ENCODE measurements at regions of chr4 and their contacts with region 1.

Region 1: GRCh38 chr4:2436301-2436700 is 17.5 kb downstream of the CFAP99 start:
- DNase-seq: peak in 2 of 3 donors; percentile 31 to 38
- H3K4me3 ChIP-seq: no peak overlapping the region
- H3K27ac ChIP-seq: no peak overlapping the region
- H3K4me1 ChIP-seq: peaks cover 0 to under 1% (median 0%) of the 10 kb centered on the region in 4 experiments
- H3K27me3 ChIP-seq: no peaks in the 10 kb centered on the region

Region 2: DNA sequence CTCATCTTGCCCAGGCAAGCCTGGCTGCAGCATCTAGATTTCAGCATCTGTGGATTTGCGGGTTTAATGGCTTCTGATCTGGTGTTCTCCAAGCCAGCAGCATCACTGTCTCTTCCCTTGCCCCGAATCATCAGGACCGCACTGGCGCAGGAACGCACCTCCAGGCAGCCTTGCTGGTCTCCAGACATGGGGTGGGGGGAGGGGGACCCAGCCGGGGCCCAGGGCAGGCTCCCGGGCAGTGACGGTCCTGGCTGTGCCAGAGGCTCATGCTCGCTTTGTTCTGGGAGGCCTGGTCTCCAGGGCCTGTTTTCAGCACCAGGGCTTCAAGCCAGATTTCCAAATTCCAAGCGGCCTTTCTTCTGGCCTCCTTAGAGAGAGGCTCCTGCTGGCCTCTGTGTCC is 12.6 kb before region 1 on chr4:
- CTCF ChIA-PET with region 1: interaction called, 13 read pairs
- POLR2A ChIA-PET with region 1: no interaction called
- DNase-seq: no peak
- H3K4me3 ChIP-seq: no peak overlapping the region
- H3K27ac ChIP-seq: no peak overlapping the region
- H3K4me1 ChIP-seq: peaks cover 0 to 10% (median 9%) of the 10 kb centered on the region in 4 experiments
- H3K27me3 ChIP-seq: peaks cover 8 to 27% (median 21%) of the 10 kb centered on the region in 5 experiments

Region 3: DNA sequence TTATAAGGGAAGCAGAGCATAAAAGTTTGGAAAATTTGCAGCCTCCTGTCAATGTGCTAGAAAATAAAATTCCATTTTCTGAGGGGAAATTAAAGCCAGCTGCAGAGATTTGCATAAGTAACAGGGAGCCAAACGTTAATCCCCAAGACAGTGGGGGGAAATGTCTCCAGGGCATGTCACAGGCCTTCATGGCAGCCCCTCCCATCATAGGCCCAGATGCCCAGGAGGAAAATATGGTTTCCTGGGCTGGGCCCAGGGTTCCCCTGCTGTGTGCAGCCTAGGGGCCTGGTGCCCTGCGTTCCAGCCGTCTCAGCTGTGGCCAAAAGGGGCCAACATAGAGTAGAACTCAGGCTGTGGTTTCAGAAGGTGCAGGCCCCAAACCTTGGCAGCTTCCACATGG is 41.9 kb after region 1 on chr4:
- CTCF ChIA-PET with region 1: no interaction called
- POLR2A ChIA-PET with region 1: no interaction called
- DNase-seq: no peak
- H3K4me3 ChIP-seq: peak overlapping the region in 1 of 7 experiments; percentile 33
- H3K27ac ChIP-seq: no peak overlapping the region
- H3K4me1 ChIP-seq: peaks cover 2 to 31% (median 26%) of the 10 kb centered on the region in 4 experiments
- H3K27me3 ChIP-seq: no peaks in the 10 kb centered on the region

Measured in common myeloid progenitor, CD34-positive (primary cell).